ENCODE measurements at regions of chrX and their contacts with region 1.

Region 1: GRCh38 chrX:120560842-120561633 is at the start of gene CUL4B:
- DNase-seq: peak; percentile 82 to 92 (median 86)
- H3K4me3 ChIP-seq: peak within 1 kb of the TSS; percentile 88 to 93 (median 91)
- H3K4me3 Mint-ChIP-seq: peak within 1 kb of the TSS; percentile 92 to 96
- H3K27ac ChIP-seq: peak within 1 kb of the TSS; percentile 92 to 97
- H3K27ac Mint-ChIP-seq: peak within 1 kb of the TSS; percentile 90 to 98 (median 96)
- H3K4me1 ChIP-seq: peaks cover 22 to 30% of the 10 kb centered on the region in 2 donors
- H3K4me1 Mint-ChIP-seq: peaks cover 25% of the 10 kb centered on the region
- H3K27me3 ChIP-seq: no peaks in the 10 kb centered on the region
- H3K27me3 Mint-ChIP-seq: peaks cover 0 to 3% (median 2%) of the 10 kb centered on the region in 3 donors
- CTCF ChIP-seq: no peak
- polyA plus RNA-seq, gene CUL4B: 13.3 to 16.9 (median 15.6) TPM

Region 2: DNA sequence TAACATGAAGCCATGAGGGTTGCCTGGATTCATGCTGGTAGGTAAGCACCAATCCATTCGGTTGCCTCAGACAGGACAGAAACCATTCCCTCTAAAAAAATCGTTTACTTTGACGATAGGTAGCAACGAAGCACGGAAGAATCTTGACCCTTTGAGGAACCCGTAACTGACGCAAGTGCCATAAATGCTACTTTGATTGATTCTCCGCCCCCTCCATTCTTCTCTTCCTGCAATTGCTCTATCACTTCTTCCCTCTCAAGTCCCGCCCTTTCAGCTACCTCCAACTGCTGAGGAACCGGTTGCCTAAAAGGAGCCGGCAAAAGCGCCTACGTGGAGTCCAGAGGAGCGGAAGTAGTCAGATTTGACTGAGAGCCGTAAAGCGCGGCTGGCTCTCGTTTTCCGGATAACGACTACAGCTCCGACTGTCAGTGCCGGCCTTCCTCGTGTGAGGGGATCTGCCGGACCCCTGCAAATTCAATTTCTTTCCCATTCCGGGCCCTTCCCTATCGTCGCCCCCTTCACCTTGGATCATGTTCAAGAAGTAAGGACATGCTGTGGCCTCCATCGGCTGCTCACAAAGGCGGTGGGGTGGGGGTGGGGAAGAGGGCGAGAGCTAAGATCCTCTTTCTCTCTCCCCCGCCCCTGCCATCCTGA is 42.8 kb after region 1 on chrX and contains the start of gene MCTS1:
- intact Hi-C with region 1: loop called in 1 of 2 experiments (anchors 5 kb)
- DNase-seq: peak; percentile 68 to 84 (median 71)
- H3K4me3 ChIP-seq: peak within 1 kb of the TSS; percentile 73 to 83 (median 80)
- H3K4me3 Mint-ChIP-seq: peak within 1 kb of the TSS; percentile 87 to 94
- H3K27ac ChIP-seq: peak within 1 kb of the TSS; percentile 93 to 98
- H3K27ac Mint-ChIP-seq: peak within 1 kb of the TSS; percentile 96 to 99 (median 98)
- H3K4me1 ChIP-seq: peaks cover 7 to 11% of the 10 kb centered on the region in 2 donors
- H3K4me1 Mint-ChIP-seq: peaks cover 5% of the 10 kb centered on the region
- H3K27me3 ChIP-seq: no peaks in the 10 kb centered on the region
- H3K27me3 Mint-ChIP-seq: peaks cover 1 to 4% (median 1%) of the 10 kb centered on the region in 3 donors
- CTCF ChIP-seq: no peak
- polyA plus RNA-seq, gene MCTS1: 25.0 to 85.1 (median 74.6) TPM

Region 3: DNA sequence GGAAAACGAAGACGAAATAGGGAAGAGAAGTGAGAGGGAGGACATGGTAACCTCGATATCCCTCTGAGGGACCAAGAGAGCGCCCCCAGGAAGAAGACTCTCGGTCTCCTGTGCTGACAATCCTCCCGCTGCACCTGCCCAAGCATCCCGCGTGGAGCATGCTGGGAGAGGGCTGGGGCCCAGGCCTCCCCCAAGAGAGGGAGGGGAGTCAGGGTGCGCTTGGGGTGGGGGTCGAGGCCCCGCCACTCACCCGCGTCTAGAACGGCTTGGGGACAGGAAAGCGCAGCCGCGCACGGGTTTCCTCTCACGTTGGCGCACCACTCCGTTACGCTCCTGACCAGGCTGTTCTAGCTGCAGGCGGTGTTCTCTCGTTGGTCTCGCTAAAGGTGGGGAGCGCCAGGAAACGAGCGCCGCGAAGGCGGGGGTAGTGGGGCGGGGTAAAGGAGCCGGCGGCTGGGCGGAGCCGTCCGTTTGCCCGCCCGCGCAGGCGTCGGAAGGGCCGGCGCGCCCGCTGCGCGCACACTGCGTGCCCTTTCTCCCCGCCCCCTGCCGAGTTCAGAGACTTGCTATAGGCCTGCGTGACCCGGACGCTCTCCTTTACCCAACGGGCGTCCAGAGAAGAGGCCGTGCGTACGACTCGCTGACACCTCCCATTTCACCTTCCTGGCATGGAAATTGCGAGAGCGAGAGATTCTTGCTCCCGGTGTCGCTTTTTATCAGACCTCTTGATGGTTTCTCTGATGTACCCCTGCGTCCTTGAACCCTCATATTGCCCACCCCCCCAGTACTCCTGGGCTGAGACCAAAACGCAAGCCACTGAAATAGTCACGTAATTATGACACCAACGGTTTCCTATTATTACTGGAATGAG is 68.9 kb after region 1 on chrX and contains the start of gene C1GALT1C1:
- intact Hi-C with region 1: loop called in 1 of 2 experiments (anchors 5 kb)
- DNase-seq: peak; percentile 87 to 90 (median 87)
- H3K4me3 ChIP-seq: peak within 1 kb of the TSS; percentile 80 to 85 (median 83)
- H3K4me3 Mint-ChIP-seq: peak within 1 kb of the TSS; percentile 90 to 94
- H3K27ac ChIP-seq: peak within 1 kb of the TSS; percentile 89 to 98
- H3K27ac Mint-ChIP-seq: peak within 1 kb of the TSS; percentile 92 to 98 (median 96)
- H3K4me1 ChIP-seq: peaks cover 8 to 16% of the 10 kb centered on the region in 2 donors
- H3K4me1 Mint-ChIP-seq: peaks cover 10% of the 10 kb centered on the region
- H3K27me3 ChIP-seq: no peaks in the 10 kb centered on the region
- H3K27me3 Mint-ChIP-seq: peaks cover 0 to 2% (median 0%) of the 10 kb centered on the region in 3 donors
- CTCF ChIP-seq: no peak
- polyA plus RNA-seq, gene C1GALT1C1: 8.3 to 44.3 (median 42.1) TPM

Measured in CD14-positive monocyte (primary cell).